Esophagus squamous epithelium (tissue), 5 donors: ENCODE measurements at regions of chr3 and their contacts with region 1.

Region 1: GRCh38 chr3:141105828-141106628 is 54.9 kb downstream of the SPSB4 start:
- DNase-seq: no peak
- H3K4me3 ChIP-seq: no peak overlapping the region
- H3K27ac ChIP-seq: no peak overlapping the region
- H3K4me1 ChIP-seq: no peaks in the 10 kb centered on the region
- H3K27me3 ChIP-seq: no peaks in the 10 kb centered on the region
- CTCF ChIP-seq: peak in 5 of 6 experiments; percentile 61 to 78 (median 74)
- POLR2A ChIP-seq: no peak

Region 2: DNA sequence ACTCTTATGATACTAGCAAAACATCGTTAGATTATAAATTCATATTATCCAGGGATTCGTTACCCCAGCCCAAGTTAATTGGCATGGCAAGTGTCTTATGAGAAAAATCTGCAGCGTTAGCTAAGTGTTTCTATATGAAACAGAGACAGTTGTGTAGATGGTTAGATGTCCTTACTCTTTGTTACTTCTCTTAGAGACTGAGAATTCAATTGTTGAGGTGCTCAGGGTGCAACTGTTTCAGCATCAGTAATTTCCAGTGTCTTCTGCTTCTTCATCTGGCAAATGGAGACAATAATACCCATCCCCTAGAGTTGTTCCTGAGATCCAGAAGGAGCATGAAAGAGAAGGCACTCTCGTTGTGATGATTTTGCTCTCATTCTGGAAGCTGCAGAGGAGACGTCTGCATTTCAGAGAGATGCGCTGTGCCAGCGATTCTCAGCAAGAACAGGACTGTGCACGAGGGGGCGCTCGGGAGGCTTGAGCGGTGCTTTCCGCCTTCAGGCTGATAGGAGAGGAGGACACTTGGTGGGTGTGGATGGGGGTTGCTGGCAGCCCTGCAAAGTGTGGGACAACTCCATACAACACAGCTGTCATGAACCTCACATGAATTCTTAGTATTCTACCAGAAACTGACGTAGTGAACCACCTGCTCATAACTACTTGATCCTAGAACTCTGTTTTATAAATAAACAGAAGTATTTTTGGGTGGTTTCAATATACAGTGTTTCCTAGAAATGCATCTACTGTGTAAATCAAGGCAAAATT is 94.6 kb before region 1 on chr3:
- intact Hi-C with region 1: loop called (anchors 10 kb)
- DNase-seq: no peak
- H3K4me3 ChIP-seq: no peak overlapping the region
- H3K27ac ChIP-seq: no peak overlapping the region
- H3K4me1 ChIP-seq: peaks cover 0 to 9% (median 0%) of the 10 kb centered on the region in 3 donors
- H3K27me3 ChIP-seq: peaks cover 0 to 39% (median 0%) of the 10 kb centered on the region in 4 donors
- CTCF ChIP-seq: peak in 5 of 6 experiments; percentile 47 to 70 (median 61)
- POLR2A ChIP-seq: no peak

Region 3: GRCh38 chr3:141153679-141153966 is 47.6 kb after region 1 on chr3:
- intact Hi-C with region 1: no loop called
- DNase-seq: no peak
- H3K4me3 ChIP-seq: no peak overlapping the region
- H3K27ac ChIP-seq: no peak overlapping the region
- H3K4me1 ChIP-seq: no peaks in the 10 kb centered on the region
- H3K27me3 ChIP-seq: peaks cover 0 to 5% (median 0%) of the 10 kb centered on the region in 4 donors
- CTCF ChIP-seq: no peak
- POLR2A ChIP-seq: no peak

Region 4: GRCh38 chr3:141174674-141175073 is 68.6 kb after region 1 on chr3:
- intact Hi-C with region 1: loop called (anchors 10 kb)
- DNase-seq: no peak
- H3K4me3 ChIP-seq: no peak overlapping the region
- H3K27ac ChIP-seq: no peak overlapping the region
- H3K4me1 ChIP-seq: no peaks in the 10 kb centered on the region
- H3K27me3 ChIP-seq: peaks cover 0 to 16% (median 0%) of the 10 kb centered on the region in 4 donors
- CTCF ChIP-seq: no peak
- POLR2A ChIP-seq: no peak